Posterior cingulate gyrus (tissue), 11 donors: ENCODE measurements at regions of chr10 and their contacts with region 1.

Region 1: GRCh38 chr10:80158598-80159127 is 26.1 kb downstream of the PLAC9 start:
- DNase-seq: peak in 8 of 10 donors; percentile 56 to 94 (median 72)

Region 2: DNA sequence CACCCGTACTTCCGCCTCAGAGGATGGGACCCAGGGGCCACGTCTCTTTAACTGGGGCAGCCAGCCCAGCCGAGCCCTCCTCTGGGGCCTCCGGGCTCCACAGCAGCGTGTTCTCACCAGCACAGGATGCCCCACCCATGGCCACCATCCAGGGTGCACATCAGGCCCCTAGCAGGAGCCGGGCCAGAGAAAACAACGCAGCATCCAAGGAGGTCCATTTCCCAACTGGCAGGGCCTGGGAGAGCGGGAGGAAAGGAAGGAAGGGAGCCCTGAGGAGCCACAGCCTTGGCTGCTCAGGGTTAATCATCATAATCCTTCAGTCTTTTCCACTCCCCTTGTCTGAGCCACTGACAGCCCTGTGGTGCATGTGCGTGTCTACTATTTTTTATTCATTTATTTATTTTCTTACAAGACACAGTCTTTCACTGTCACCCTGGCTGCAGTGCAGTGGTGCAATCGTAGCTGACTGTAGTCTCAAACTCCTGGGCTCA is 22.5 kb before region 1 on chr10:
- intact Hi-C with region 1: no loop called
- DNase-seq: peak in 1 of 10 donors; percentile 72

Region 3: GRCh38 chr10:80202934-80203834 is 44.5 kb after region 1 on chr10:
- intact Hi-C with region 1: loop called (anchors 5 kb)
- DNase-seq: no peak